B cell (primary cell): ENCODE measurements at regions of chr6 and their contacts with region 1.

Region 1: DNA sequence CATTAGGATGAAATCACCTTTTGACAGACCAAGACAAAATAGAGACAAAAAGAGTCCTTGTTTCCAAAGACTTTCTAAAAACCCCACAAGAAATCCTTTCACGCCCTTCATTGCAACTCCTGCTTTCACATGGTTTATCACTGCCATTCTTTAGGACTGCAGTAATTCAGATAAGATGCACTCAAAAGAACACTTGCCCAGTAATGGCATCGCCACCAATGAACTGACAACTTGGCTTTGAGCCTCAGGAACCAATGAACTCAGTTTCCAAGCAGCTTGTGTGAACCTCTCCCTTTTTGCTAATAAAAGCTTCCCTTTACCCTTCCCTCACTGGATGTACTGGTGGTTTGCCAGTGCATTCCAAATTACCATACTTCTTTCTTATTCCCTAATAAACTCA is 21.8 kb downstream of the OSTM1 start:
- DNase-seq: no peak
- ATAC-seq: no peak
- H3K4me3 ChIP-seq: no peak overlapping the region
- H3K4me3 Mint-ChIP-seq: no peak overlapping the region
- H3K27ac ChIP-seq: no peak overlapping the region
- H3K27ac Mint-ChIP-seq: no peak overlapping the region
- H3K4me1 ChIP-seq: no peaks in the 10 kb centered on the region
- H3K4me1 Mint-ChIP-seq: peaks cover 2% of the 10 kb centered on the region
- H3K27me3 ChIP-seq: no peaks in the 10 kb centered on the region
- H3K27me3 Mint-ChIP-seq: no peaks in the 10 kb centered on the region
- CTCF ChIP-seq: no peak

Region 2: DNA sequence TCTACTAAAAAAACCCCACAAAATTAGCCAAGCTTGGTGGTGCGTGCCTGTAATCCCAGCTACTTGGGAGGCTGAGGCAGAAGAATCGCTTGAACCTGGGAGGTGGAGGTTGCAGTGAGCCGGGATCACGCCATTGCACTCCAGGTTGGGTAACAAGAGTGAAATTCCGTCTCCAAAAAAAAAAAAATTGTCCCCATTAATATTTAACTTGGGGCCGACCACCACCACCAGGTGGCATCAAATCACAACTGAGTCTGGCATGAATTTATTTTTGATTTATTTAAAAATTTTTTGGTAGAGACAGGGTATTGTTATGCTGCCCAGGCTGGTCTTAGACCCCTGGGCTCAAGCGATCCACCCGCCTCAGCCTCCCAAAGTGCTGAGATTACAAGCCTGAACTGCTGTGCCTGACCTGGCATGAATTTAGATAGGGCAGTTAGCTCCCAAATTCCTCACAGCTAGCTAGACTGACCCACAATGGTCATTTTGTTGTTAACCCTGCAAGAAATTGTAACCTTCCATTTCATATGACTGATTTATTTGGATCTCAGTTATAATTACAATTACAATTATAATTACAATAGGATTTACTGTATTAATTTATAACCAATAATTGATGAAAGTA is 920.3 kb before region 1 on chr6:
- CTCF ChIA-PET with region 1: interaction called, 12 read pairs
- POLR2A ChIA-PET with region 1: no interaction called
- intact Hi-C with region 1: loop called (anchors 5 kb)
- DNase-seq: peak; percentile 47
- ATAC-seq: no peak
- H3K4me3 ChIP-seq: no peak overlapping the region
- H3K4me3 Mint-ChIP-seq: no peak overlapping the region
- H3K27ac ChIP-seq: no peak overlapping the region
- H3K27ac Mint-ChIP-seq: no peak overlapping the region
- H3K4me1 ChIP-seq: no peaks in the 10 kb centered on the region
- H3K4me1 Mint-ChIP-seq: no peaks in the 10 kb centered on the region
- H3K27me3 ChIP-seq: no peaks in the 10 kb centered on the region
- H3K27me3 Mint-ChIP-seq: peaks cover 3% of the 10 kb centered on the region
- CTCF ChIP-seq: peak; percentile 59

Region 3: GRCh38 chr6:107318100-107318736 is 734.5 kb before region 1 on chr6:
- CTCF ChIA-PET with region 1: interaction called, 8 read pairs
- POLR2A ChIA-PET with region 1: no interaction called
- intact Hi-C with region 1: loop called (anchors 5 kb)
- DNase-seq: peak; percentile 61
- ATAC-seq: peak; percentile 80
- H3K4me3 ChIP-seq: no peak overlapping the region
- H3K4me3 Mint-ChIP-seq: no peak overlapping the region
- H3K27ac ChIP-seq: no peak overlapping the region
- H3K27ac Mint-ChIP-seq: no peak overlapping the region
- H3K4me1 ChIP-seq: peaks cover 9 to 10% of the 10 kb centered on the region in 2 donors
- H3K4me1 Mint-ChIP-seq: peaks cover 16% of the 10 kb centered on the region
- H3K27me3 ChIP-seq: no peaks in the 10 kb centered on the region
- H3K27me3 Mint-ChIP-seq: no peaks in the 10 kb centered on the region
- CTCF ChIP-seq: peak; percentile 53

Region 4: GRCh38 chr6:107866606-107867301 is 186.0 kb before region 1 on chr6:
- CTCF ChIA-PET with region 1: interaction called, 18 read pairs
- POLR2A ChIA-PET with region 1: no interaction called
- intact Hi-C with region 1: no loop called
- DNase-seq: peak; percentile 62
- ATAC-seq: peak; percentile 24
- H3K4me3 ChIP-seq: peak overlapping the region in 3 of 5 experiments; percentile 22 to 37 (median 30)
- H3K4me3 Mint-ChIP-seq: peak overlapping the region; percentile 39
- H3K27ac ChIP-seq: no peak overlapping the region
- H3K27ac Mint-ChIP-seq: no peak overlapping the region
- H3K4me1 ChIP-seq: peaks cover 28 to 30% of the 10 kb centered on the region in 2 donors
- H3K4me1 Mint-ChIP-seq: peaks cover 43% of the 10 kb centered on the region
- H3K27me3 ChIP-seq: no peaks in the 10 kb centered on the region
- H3K27me3 Mint-ChIP-seq: peaks cover 3% of the 10 kb centered on the region
- CTCF ChIP-seq: peak; percentile 80

Region 5: DNA sequence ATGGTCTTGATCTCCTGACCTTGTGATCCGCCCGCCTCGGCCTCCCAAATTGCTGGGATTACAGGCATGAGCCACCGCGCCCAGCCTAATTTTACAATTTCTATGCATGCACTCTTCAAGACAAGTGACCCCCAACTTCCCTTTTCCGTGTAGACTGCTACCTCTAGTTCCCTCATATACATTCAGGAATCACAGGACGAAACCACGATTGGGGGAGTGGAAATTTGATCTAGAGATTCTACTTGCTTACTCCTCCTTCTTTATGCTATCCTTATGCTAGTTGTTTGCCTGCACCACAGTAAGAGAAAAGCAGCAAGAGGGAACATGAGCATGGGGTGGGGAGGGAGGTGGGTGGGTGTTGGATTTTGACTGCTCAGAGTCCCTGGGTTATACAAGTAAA is 13.0 kb before region 1 on chr6:
- CTCF ChIA-PET with region 1: interaction called, 12 read pairs
- POLR2A ChIA-PET with region 1: interaction called, 8 read pairs
- intact Hi-C with region 1: no loop called
- DNase-seq: no peak
- ATAC-seq: no peak
- H3K4me3 ChIP-seq: no peak overlapping the region
- H3K4me3 Mint-ChIP-seq: no peak overlapping the region
- H3K27ac ChIP-seq: no peak overlapping the region
- H3K27ac Mint-ChIP-seq: no peak overlapping the region
- H3K4me1 ChIP-seq: no peaks in the 10 kb centered on the region
- H3K4me1 Mint-ChIP-seq: no peaks in the 10 kb centered on the region
- H3K27me3 ChIP-seq: no peaks in the 10 kb centered on the region
- H3K27me3 Mint-ChIP-seq: no peaks in the 10 kb centered on the region
- CTCF ChIP-seq: no peak

Region 6: GRCh38 chr6:108080010-108080780 is 27.5 kb after region 1 on chr6:
- CTCF ChIA-PET with region 1: no interaction called
- POLR2A ChIA-PET with region 1: no interaction called
- intact Hi-C with region 1: no loop called
- DNase-seq: no peak
- ATAC-seq: no peak
- H3K4me3 ChIP-seq: no peak overlapping the region
- H3K4me3 Mint-ChIP-seq: no peak overlapping the region
- H3K27ac ChIP-seq: no peak overlapping the region
- H3K27ac Mint-ChIP-seq: no peak overlapping the region
- H3K4me1 ChIP-seq: peaks cover 3 to 5% of the 10 kb centered on the region in 2 donors
- H3K4me1 Mint-ChIP-seq: peaks cover 5% of the 10 kb centered on the region
- H3K27me3 ChIP-seq: peaks cover 0 to 6% (median 0%) of the 10 kb centered on the region in 4 experiments
- H3K27me3 Mint-ChIP-seq: peaks cover 36% of the 10 kb centered on the region
- CTCF ChIP-seq: no peak

Region 7: DNA sequence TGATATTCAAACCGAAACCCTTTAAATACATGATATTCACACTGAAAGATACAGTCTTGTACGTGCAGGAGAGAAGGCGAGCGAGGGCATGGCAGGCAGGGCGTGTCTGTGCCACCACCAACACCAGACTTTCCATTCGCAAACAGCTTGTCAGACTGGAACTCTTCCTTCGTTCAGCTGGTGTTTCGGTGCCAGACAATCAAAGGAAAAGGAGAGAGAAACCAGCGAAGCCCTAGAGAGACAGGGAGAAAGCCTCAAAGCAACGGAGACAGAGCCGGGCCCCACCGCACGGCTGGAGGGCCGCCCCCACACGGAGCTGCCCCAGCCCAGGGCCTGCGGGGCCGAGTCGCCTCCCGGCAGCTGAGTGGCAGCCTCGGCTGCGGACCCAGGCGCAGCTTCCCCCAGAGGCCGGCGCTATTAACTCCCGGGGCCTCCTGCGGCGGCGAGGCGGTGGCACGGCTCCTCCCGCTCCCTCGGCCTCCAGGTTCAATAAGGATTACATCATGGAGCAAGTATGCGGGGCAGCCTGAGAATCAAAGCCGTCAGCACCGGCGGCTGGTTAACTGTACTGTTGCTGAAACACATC is 81.0 kb after region 1 on chr6:
- CTCF ChIA-PET with region 1: no interaction called
- POLR2A ChIA-PET with region 1: no interaction called
- intact Hi-C with region 1: no loop called
- DNase-seq: peak; percentile 60
- ATAC-seq: peak; percentile 74
- H3K4me3 ChIP-seq: peak overlapping the region; percentile 7 to 64 (median 44)
- H3K4me3 Mint-ChIP-seq: peak overlapping the region; percentile 88
- H3K27ac ChIP-seq: no peak overlapping the region
- H3K27ac Mint-ChIP-seq: no peak overlapping the region
- H3K4me1 ChIP-seq: peaks cover 21 to 22% of the 10 kb centered on the region in 2 donors
- H3K4me1 Mint-ChIP-seq: peaks cover 16% of the 10 kb centered on the region
- H3K27me3 ChIP-seq: peaks cover 0 to 61% (median 46%) of the 10 kb centered on the region in 4 experiments
- H3K27me3 Mint-ChIP-seq: peaks cover 73% of the 10 kb centered on the region
- CTCF ChIP-seq: no peak